SK-N-SH (cell line): ENCODE measurements at regions of chr12 and their contacts with region 1.

Region 1: DNA sequence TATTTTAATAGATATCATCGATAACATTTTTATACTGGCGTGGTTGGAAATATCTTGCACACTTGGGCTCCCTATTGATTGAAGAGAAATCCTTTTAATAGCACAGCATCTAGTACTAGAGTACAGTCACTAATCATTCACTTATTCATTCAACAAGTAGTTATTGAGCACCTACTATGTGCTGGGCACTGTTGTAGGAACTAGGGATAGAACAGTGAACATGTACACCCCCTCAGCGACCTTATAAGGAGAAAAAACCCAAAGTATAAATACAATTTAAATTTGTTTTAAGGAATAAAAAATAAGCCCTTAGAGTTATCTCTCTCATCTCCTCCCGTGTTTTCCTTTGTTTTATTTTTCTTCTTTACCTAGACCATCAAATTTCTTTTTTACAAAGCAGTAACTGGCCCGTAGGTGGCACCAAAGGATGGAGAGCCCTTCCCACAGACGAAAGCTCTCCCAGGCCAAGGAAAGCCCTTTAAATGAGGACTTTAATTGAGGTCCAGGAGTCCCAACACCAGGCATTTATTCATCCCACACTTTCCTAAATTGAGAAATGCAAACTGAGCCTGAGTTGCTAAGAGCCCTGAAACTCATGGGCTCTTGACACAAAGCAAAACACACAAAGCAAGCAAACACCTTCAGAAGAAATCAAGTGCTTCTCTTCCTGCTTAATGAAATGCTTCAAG is 29.0 kb downstream of the PEBP1 start:
- DNase-seq: peak; percentile 56
- H3K4me3 ChIP-seq: no peak overlapping the region
- H3K27ac ChIP-seq: no peak overlapping the region
- H3K4me1 ChIP-seq: no peaks in the 10 kb centered on the region
- H3K27me3 ChIP-seq: no peaks in the 10 kb centered on the region
- CTCF ChIP-seq: peak; percentile 68
- EP300 ChIP-seq: no peak
- RAD21 ChIP-seq: peak; percentile 75

Region 2: DNA sequence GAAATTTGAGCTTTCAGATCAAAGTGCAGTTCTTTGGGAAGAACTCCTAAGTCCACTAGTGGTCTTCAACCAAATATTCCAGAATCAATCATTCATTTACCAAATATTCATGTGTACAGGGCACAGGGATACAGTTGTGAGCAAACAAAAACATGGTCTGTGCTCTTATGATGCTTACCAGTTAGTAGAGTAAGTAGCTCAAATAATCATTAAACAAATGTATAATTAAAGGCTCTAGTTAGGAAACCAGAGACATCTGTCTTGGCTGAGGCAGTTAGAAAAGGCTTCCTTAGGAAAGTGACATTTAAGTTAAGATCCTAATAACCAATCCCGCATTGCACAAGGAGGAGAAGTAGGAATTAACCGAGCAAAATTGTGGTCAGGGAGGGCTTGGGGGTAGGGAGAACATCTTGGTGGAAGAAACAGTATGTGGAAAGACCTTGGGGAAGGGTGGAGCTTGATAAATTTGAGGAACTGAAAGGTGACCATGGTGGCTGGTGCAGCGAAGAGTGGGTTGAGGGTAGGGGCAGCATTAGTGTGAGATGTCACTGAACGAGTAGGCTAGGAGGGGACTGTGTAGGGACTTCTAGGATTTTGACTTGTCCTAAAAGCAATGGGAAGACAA is 11.0 kb after region 1 on chr12:
- CTCF ChIA-PET with region 1: interaction called, 64 read pairs
- POLR2A ChIA-PET with region 1: no interaction called
- DNase-seq: no peak
- H3K4me3 ChIP-seq: no peak overlapping the region
- H3K27ac ChIP-seq: no peak overlapping the region
- H3K4me1 ChIP-seq: no peaks in the 10 kb centered on the region
- H3K27me3 ChIP-seq: no peaks in the 10 kb centered on the region
- CTCF ChIP-seq: no peak
- EP300 ChIP-seq: no peak
- RAD21 ChIP-seq: no peak

Region 3: GRCh38 chr12:118183705-118184104 is 18.8 kb after region 1 on chr12:
- CTCF ChIA-PET with region 1: interaction called, 64 read pairs
- POLR2A ChIA-PET with region 1: no interaction called
- DNase-seq: no peak
- H3K4me3 ChIP-seq: no peak overlapping the region
- H3K27ac ChIP-seq: peak overlapping the region in 1 of 2 experiments; percentile 78; a peak in 2 of 4 replicates
- H3K4me1 ChIP-seq: peaks cover 11 to 28% of the 10 kb centered on the region in 2 experiments; a peak in 3 of 4 replicates
- H3K27me3 ChIP-seq: no peaks in the 10 kb centered on the region
- CTCF ChIP-seq: no peak
- EP300 ChIP-seq: no peak
- RAD21 ChIP-seq: no peak

Region 4: DNA sequence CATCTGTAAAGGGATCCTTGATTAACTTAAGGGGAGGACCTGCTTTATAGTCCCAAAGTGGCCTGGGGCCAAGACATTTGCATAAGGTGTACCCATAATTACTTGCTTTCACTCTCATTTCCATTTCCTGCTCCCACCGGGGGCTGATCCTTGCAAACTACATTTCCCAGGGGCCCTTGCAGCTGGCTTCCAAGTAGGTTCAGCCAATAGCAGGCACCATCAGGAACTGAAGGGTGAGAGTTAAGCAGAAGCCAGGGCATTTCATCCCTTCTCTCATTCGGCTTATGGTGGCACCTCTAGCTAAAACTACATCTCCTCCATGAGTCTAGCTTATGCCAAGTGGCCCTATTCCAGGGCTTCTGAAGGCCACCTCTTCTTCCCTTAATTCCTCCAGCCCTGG is 1258.3 kb after region 1 on chr12:
- CTCF ChIA-PET with region 1: no interaction called
- POLR2A ChIA-PET with region 1: no interaction called
- DNase-seq: peak; percentile 30
- H3K4me3 ChIP-seq: no peak overlapping the region
- H3K27ac ChIP-seq: no peak overlapping the region
- H3K4me1 ChIP-seq: no peaks in the 10 kb centered on the region
- H3K27me3 ChIP-seq: no peaks in the 10 kb centered on the region
- CTCF ChIP-seq: no peak
- EP300 ChIP-seq: no peak
- RAD21 ChIP-seq: no peak